ENCODE measurements at regions of chr6 and their contacts with region 1.

Region 1: GRCh38 chr6:30707281-30707872 is 9.7 kb downstream of the MDC1 start:
- DNase-seq: peak in 1 of 10 donors; percentile 46
- ATAC-seq: no peak
- H3K4me3 Mint-ChIP-seq: no peak overlapping the region
- H3K27ac Mint-ChIP-seq: peak overlapping the region in 2 of 10 donors; percentile 26 to 73
- H3K4me1 Mint-ChIP-seq: peaks cover 9 to 28% (median 16%) of the 10 kb centered on the region in 4 donors
- H3K27me3 Mint-ChIP-seq: no peaks in the 10 kb centered on the region

Region 2: DNA sequence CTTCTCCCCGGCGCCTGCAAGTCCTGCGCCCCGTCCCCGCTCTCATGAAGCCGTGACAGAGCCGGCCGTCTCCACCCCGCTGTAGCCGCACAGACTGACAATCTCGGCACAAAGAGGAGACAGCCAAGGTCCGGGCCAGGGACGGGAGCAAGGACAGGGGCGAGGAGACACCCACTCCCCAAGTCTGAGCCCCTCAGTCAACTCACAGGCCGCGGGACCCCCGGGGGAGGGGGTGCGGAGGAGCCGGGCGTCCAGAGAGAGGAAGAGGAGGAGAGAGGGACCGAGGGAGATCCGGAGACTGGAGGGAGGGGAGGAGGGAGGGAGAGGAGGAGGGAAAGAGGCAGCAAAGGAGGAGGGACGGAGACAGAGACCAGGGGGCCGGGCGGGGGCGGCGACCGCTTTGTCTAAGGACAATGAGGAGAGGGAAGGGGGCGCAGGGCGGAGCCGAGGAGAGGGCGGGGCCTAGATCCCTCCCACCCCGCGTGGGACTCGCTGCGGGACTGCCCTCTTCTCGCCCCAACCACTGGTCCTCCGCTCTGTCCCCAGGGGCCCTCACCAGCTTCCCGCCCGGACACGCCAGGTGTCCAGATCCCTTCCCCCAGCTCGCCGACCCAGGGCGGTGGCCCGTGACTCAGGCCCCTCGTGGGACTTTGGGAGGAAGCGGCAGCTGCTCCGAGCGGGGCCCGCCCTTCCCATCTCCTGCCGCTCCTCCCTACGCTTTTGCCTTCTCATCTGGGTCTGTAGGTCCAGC is 20.3 kb before region 1 on chr6:
- POLR2A ChIA-PET with region 1: interaction called, 594 read pairs
- DNase-seq: peak; percentile 27 to 82 (median 57)
- ATAC-seq: peak; percentile 22 to 34
- H3K4me3 Mint-ChIP-seq: peak overlapping the region; percentile 94 to 100 (median 99)
- H3K27ac Mint-ChIP-seq: peak overlapping the region; percentile 81 to 99 (median 97)
- H3K4me1 Mint-ChIP-seq: peaks cover 43 to 60% (median 45%) of the 10 kb centered on the region in 4 donors
- H3K27me3 Mint-ChIP-seq: no peaks in the 10 kb centered on the region